Endothelial cell of umbilical vein (primary cell): ENCODE measurements at regions of chr3 and their contacts with region 1.

Region 1: DNA sequence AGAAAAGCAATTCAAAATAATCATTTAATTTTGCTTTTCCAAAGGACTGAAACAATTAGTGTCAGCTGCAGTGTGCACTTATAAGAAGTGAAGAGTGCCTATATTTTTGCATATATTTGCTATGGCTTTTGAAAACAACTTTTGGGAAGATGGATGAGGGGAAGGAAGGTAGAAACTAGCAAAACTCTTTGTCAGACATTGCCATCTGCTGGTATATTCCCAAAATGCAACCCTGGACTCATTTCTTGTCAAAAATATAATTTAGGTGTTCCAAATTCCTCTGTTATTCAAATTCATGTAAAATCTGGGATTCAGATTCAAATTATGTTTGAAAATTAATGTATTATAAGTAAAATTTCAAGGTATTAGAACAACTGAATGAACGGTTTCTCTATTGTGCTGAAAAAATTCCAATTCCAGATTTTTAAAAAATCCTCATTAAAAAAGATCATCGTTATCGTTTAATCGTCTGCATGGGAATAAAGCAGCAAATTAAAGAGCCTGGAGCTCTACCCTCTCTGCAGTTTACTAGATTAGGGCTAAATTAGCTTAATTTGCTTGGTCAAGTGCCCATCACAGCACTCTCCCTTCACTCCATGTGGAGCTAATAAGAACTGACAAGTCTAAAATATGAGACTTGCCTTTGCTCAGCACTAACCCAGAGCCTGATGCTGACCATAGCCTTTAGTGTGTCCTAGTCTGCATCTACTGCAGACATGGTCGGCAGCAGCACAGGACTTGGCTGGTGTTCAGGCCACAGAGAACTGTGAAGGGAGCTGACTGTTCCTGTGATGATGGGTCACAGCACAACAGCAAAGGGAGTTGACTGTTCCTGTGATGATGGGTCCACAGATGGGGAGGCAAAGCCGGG is 67.9 kb upstream of the MITF start:
- DNase-seq: peak; percentile 62
- H3K4me3 ChIP-seq: no peak overlapping the region
- H3K27ac ChIP-seq: no peak overlapping the region
- H3K4me1 ChIP-seq: peaks cover 4% of the 10 kb centered on the region
- H3K27me3 ChIP-seq: no peaks in the 10 kb centered on the region
- CTCF ChIP-seq: peak; percentile 48 to 59
- POLR2A ChIP-seq: no peak

Region 2: DNA sequence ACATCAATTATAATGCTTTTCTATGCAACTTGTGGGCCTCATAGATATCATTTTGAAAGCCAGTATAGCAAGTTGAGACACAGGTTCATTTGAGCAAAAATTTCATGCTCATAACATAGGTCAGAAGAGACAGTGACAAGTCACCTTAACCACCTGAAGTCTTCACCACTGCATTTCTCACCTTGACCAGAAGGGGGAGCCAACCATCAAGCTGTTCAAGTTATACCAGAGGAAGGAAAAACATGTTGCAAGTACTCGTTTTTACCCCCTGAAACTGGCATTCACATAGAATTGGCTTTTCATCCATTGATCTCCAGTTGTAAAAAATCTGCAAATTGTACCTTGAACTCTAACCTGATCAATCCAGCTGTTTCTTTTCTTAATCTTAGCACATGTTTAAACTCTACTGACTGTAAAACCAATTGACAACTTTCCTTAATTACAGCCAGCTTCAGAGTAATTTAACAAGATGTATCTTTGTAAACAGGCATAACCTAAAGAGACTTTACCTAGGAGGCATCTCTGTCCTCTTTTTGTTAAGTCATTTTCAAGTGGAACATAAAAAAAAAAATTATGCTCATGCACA is 550.3 kb before region 1 on chr3:
- CTCF ChIA-PET with region 1: interaction called, 13 read pairs
- POLR2A ChIA-PET with region 1: no interaction called
- dilution Hi-C with region 1: no loop called
- intact Hi-C with region 1: loop called (anchors 1 kb)
- DNase-seq: peak; percentile 86
- H3K4me3 ChIP-seq: no peak overlapping the region
- H3K27ac ChIP-seq: no peak overlapping the region
- H3K4me1 ChIP-seq: peaks cover 20% of the 10 kb centered on the region
- H3K27me3 ChIP-seq: no peaks in the 10 kb centered on the region
- CTCF ChIP-seq: peak; percentile 85 to 88
- POLR2A ChIP-seq: no peak

Region 3: DNA sequence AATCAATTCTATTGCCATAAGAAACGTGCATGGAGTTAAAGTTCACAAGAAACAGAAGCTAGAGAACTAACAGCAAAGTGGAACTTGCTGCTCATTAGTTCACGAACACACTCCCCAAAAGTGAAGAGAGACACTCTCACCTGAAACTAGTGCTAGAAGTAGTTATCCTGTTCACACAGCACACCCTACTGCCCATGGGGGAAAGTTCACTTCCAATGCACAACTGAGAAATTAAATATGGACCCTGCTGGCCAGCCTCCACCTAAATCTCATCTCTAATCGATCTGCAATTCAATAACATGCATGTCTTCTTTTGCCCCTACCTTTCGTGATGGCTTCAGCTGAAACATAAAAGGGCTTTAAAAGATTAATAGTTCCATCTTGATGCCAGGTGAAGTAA is 246.1 kb before region 1 on chr3:
- CTCF ChIA-PET with region 1: interaction called, 16 read pairs
- POLR2A ChIA-PET with region 1: no interaction called
- dilution Hi-C with region 1: no loop called
- intact Hi-C with region 1: loop called (anchors 1 kb)
- DNase-seq: peak; percentile 69
- H3K4me3 ChIP-seq: no peak overlapping the region
- H3K27ac ChIP-seq: no peak overlapping the region
- H3K4me1 ChIP-seq: peaks cover 15% of the 10 kb centered on the region
- H3K27me3 ChIP-seq: no peaks in the 10 kb centered on the region
- CTCF ChIP-seq: peak; percentile 71 to 74
- POLR2A ChIP-seq: no peak

Region 4: GRCh38 chr3:69451594-69451993 is 219.7 kb before region 1 on chr3:
- CTCF ChIA-PET with region 1: interaction called, 57 read pairs
- POLR2A ChIA-PET with region 1: no interaction called
- dilution Hi-C with region 1: no loop called
- intact Hi-C with region 1: loop called (anchors 1 kb)
- DNase-seq: peak; percentile 35
- H3K4me3 ChIP-seq: no peak overlapping the region
- H3K27ac ChIP-seq: no peak overlapping the region
- H3K4me1 ChIP-seq: no peaks in the 10 kb centered on the region
- H3K27me3 ChIP-seq: no peaks in the 10 kb centered on the region
- CTCF ChIP-seq: peak; percentile 23 to 36
- POLR2A ChIP-seq: no peak

Region 5: DNA sequence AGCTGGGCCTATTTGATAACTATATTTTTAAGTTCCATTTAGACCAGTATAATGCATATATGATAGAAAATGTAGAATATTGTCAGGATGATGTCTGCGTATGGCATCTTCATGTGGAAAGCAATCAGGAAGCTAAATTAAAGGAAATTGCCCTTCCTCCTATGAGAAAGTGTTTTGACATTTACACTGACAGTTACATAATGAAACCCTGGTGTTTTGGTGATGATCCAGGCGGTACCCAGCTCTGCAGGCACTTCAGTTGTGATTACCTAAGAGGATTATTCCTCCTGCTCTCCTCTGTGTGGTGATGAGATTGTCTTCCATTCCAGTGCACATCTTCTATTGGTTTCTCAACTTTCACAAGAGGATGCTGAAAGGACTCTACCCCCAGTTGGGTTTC is 58.5 kb before region 1 on chr3:
- CTCF ChIA-PET with region 1: no interaction called
- POLR2A ChIA-PET with region 1: no interaction called
- dilution Hi-C with region 1: no loop called
- intact Hi-C with region 1: loop called (anchors 2 kb)
- DNase-seq: no peak
- H3K4me3 ChIP-seq: no peak overlapping the region
- H3K27ac ChIP-seq: no peak overlapping the region
- H3K4me1 ChIP-seq: no peaks in the 10 kb centered on the region
- H3K27me3 ChIP-seq: peaks cover 0 to 3% of the 10 kb centered on the region in 2 experiments
- CTCF ChIP-seq: no peak
- POLR2A ChIP-seq: no peak

Region 6: DNA sequence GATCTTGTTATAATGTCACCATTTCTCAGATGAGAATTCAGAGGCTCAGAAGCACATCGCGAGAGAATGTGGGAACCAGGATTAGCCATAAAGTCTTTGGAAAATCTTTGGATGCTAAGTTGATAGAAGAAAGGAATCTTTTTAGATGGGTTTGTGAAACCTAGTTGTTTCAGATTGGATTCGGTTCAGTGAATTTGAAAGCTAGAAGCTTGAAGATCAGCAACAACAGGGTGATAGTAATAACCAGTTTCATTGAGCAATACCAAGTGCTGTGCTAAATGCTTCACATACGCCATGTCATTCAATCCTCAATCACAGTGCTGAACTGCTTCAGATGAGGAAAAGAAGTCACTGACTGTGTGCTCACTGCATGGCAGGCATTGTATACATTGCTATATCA is 20.5 kb after region 1 on chr3:
- CTCF ChIA-PET with region 1: no interaction called
- POLR2A ChIA-PET with region 1: no interaction called
- dilution Hi-C with region 1: no loop called
- intact Hi-C with region 1: no loop called
- DNase-seq: no peak
- H3K4me3 ChIP-seq: no peak overlapping the region
- H3K27ac ChIP-seq: no peak overlapping the region
- H3K4me1 ChIP-seq: no peaks in the 10 kb centered on the region
- H3K27me3 ChIP-seq: peaks cover 6 to 10% of the 10 kb centered on the region in 2 experiments
- CTCF ChIP-seq: no peak
- POLR2A ChIP-seq: no peak

Region 7: DNA sequence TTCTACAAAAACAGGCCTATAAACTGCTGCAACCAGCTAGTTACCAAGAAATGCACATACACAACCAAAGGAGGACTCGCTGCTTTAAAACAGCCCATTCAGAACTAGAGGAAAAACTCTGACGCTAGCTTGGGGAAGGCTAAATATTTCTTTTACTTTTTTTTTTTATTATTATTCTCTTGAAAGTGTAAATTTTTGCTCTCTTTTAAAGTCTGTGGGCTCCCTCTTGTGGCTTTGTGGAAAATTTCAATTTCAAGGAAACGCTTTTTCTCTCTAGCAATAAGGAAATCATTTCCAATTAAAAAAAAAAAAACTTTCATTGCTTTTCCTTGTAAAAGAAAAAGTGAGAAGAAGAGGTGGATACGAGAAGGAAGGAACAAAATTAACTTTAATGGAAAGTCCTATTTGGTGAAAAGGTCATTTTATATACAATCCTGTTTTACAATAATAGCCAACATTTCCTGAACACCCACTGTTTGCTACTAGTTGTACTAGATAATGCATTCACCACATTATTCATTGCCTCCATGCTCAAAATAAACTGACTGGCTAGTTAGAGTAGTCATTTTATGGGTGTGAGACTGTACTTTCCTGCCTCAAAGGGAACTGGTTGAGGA is 277.0 kb after region 1 on chr3:
- CTCF ChIA-PET with region 1: interaction called, 5 read pairs
- POLR2A ChIA-PET with region 1: no interaction called
- dilution Hi-C with region 1: no loop called
- intact Hi-C with region 1: loop called (anchors 1 kb)
- DNase-seq: peak; percentile 60
- H3K4me3 ChIP-seq: no peak overlapping the region
- H3K27ac ChIP-seq: no peak overlapping the region
- H3K4me1 ChIP-seq: no peaks in the 10 kb centered on the region
- H3K27me3 ChIP-seq: no peaks in the 10 kb centered on the region
- CTCF ChIP-seq: peak; percentile 30 to 39
- POLR2A ChIP-seq: no peak